Activated T-helper 2 cell treated with anti-CD3 and anti-CD28 coated beads, Interferon-gamma antibody, Interleukin-2, Interleukin-4, amounts not matched to agents 10 μg/mL and 5 μg/mL and 100 μg/mL, durations not matched to agents 14 hours and 24 hours and 36 hours (primary cell): ENCODE measurements at regions of chr17 and their contacts with region 1.

Region 1: GRCh38 chr17:68019675-68020408 is 15.7 kb upstream of the KPNA2 start:
- DNase-seq: peak; percentile 97
- H3K4me3 Mint-ChIP-seq: peak overlapping the region; percentile 81
- H3K27ac Mint-ChIP-seq: peak overlapping the region; percentile 81
- H3K4me1 Mint-ChIP-seq: peaks cover 10% of the 10 kb centered on the region
- H3K27me3 Mint-ChIP-seq: peaks cover 8% of the 10 kb centered on the region

Region 2: GRCh38 chr17:67993596-67994361 is 26.1 kb before region 1 on chr17:
- intact Hi-C with region 1: loop called (anchors 2 kb)
- DNase-seq: peak; percentile 69
- H3K4me3 Mint-ChIP-seq: peak overlapping the region; percentile 91
- H3K27ac Mint-ChIP-seq: peak overlapping the region; percentile 82
- H3K4me1 Mint-ChIP-seq: peaks cover 33% of the 10 kb centered on the region
- H3K27me3 Mint-ChIP-seq: peaks cover 23% of the 10 kb centered on the region